ENCODE measurements at regions of chr14 and their contacts with region 1.

Region 1: GRCh38 chr14:67704484-67705089 is 2.9 kb downstream of the RDH12 start:
- DNase-seq: peak; percentile 24
- H3K4me3 Mint-ChIP-seq: no peak overlapping the region
- H3K27ac Mint-ChIP-seq: no peak overlapping the region
- H3K4me1 Mint-ChIP-seq: peaks cover 2% of the 10 kb centered on the region
- H3K27me3 Mint-ChIP-seq: peaks cover 3% of the 10 kb centered on the region

Region 2: DNA sequence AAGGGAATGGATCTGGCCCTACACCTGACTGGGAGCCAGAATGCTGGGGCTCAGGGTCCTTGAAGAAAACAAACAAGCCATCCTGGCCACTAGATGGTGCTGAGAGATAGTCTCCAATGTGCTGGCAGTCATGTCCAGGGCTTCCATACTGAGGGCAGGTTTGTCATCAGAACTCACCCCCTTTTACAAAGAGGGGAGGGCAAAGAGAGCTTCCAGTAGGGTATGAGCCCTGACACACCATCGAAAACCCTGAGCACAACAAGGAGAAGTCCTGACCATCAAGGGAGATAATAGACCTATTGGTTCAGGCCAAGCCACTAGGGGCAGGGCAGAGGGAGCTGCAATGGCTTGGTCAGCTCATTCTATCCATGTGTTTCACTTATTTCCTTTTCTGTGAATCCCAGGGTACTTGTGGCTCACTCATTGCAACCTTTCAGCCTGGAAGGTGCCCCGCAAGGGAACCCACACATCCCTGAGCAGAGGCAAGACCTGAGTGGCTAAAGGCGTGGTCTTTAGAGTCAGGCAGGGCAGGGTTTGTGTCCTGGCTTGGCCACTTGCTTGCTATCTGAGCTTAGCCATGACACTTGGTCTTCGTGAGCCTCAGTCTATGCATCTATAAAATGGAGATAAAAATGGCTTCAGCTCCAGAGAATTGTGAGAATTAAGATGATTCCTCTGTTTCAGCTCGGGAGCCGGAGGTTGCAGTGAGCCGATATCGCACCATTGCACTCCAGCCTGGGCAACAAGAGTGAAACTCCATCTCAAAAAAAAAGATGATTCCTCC is 177.7 kb before region 1 on chr14:
- CTCF ChIA-PET with region 1: interaction called, 38 read pairs
- POLR2A ChIA-PET with region 1: no interaction called
- intact Hi-C with region 1: no loop called
- DNase-seq: peak; percentile 52
- H3K4me3 Mint-ChIP-seq: no peak overlapping the region
- H3K27ac Mint-ChIP-seq: no peak overlapping the region
- H3K4me1 Mint-ChIP-seq: peaks cover 3% of the 10 kb centered on the region
- H3K27me3 Mint-ChIP-seq: peaks cover 22% of the 10 kb centered on the region

Region 3: GRCh38 chr14:67619446-67620216 is 85.0 kb before region 1 on chr14 and contains the start of gene ARG2:
- CTCF ChIA-PET with region 1: interaction called, 149 read pairs
- POLR2A ChIA-PET with region 1: no interaction called
- intact Hi-C with region 1: loop called (anchors 1 kb)
- DNase-seq: peak; percentile 98
- H3K4me3 Mint-ChIP-seq: peak within 1 kb of the TSS; percentile 84
- H3K27ac Mint-ChIP-seq: no peak within 1 kb of the TSS
- H3K4me1 Mint-ChIP-seq: peaks cover 26% of the 10 kb centered on the region
- H3K27me3 Mint-ChIP-seq: peaks cover 15% of the 10 kb centered on the region
- total RNA-seq, gene ARG2: 6.8 to 7.6 TPM

Region 4: DNA sequence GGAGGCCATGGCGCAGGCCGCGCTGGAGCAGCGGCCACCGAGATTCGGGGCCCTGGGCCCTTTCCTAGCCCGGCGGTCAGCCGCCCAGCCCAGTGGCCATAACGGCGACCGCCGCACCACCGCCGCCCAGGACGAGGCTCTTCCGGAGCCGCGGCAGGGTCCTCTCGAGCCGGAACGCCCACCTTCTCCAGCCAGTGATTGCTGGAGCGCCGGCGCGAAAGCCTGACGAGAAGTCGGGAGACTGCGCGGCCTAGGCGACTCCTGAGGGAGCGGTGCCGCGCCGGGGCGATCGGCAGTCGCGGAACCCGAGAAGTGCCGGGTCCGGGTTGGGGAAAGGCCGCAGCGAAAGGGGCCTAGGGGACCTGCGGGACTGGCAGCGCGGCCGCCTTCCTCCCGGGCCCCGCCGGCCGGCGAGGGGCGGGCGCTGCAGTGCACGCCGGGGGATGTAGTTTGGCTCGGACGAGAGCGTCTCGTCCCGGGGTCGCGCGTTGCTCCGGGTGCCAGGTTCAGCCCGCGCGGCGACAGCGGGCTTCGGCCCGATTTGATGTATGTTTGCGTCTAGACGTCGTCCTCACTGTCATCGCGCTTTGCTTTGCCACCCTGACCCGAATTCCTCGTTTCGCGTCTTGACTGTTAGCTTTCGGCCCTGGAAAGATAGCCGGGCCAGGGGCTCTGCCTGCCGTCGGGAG is 30.0 kb before region 1 on chr14 and contains the start of gene VTI1B:
- CTCF ChIA-PET with region 1: interaction called, 73 read pairs
- POLR2A ChIA-PET with region 1: no interaction called
- intact Hi-C with region 1: loop called (anchors 5 kb)
- DNase-seq: peak; percentile 79
- H3K4me3 Mint-ChIP-seq: peak within 1 kb of the TSS; percentile 86
- H3K27ac Mint-ChIP-seq: peak within 1 kb of the TSS; percentile 83
- H3K4me1 Mint-ChIP-seq: peaks cover 42% of the 10 kb centered on the region
- H3K27me3 Mint-ChIP-seq: no peaks in the 10 kb centered on the region
- total RNA-seq, gene VTI1B: 75.6 to 75.8 TPM